ENCODE measurements at regions of chr17 and their contacts with region 1.

Region 1: DNA sequence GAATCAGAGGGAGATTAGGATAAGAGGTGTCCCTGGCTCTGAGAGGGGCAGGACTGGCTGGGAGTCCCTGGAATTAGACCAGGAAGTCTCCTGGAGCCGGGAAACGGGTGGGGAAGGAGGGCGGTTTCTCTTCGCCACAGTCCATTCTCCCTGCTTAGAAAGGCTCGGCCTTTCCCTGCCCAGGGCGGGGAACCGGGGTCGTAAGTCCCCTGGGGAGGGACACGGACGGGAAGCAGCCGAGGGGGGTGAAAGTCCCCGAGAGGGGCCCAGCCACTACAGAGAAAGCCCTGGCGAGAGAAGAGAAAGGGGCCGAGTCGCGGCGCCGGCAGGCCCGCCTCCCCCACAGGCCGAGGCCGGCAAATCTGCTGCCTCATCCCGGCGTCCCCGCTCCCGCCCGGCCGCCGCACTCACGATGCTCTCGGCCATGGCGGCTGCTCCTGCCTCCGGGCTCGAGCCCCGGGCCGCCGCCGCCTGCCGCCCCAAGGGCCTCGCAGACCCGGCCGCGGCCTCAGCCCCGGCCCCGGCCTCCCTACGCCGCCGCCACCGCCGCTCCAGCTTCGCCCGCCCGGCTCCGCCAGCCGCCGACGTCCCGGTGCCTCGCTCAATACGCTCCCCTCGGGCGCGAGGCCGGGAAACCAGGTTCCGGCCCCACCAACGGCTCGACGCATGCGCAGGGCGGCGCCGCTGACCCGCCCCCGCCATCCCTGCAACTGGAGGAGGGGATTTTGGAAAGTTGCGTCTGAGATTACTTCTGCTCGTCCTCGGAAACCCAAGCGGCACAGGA is at the starts of genes NPLOC4 and TSPAN10:
- H3K4me3 Mint-ChIP-seq: peak within 1 kb of the TSS; percentile 83
- H3K27ac Mint-ChIP-seq: peak within 1 kb of the TSS; percentile 92
- H3K4me1 Mint-ChIP-seq: peaks cover 13% of the 10 kb centered on the region
- H3K27me3 Mint-ChIP-seq: peaks cover 4% of the 10 kb centered on the region

Region 2: DNA sequence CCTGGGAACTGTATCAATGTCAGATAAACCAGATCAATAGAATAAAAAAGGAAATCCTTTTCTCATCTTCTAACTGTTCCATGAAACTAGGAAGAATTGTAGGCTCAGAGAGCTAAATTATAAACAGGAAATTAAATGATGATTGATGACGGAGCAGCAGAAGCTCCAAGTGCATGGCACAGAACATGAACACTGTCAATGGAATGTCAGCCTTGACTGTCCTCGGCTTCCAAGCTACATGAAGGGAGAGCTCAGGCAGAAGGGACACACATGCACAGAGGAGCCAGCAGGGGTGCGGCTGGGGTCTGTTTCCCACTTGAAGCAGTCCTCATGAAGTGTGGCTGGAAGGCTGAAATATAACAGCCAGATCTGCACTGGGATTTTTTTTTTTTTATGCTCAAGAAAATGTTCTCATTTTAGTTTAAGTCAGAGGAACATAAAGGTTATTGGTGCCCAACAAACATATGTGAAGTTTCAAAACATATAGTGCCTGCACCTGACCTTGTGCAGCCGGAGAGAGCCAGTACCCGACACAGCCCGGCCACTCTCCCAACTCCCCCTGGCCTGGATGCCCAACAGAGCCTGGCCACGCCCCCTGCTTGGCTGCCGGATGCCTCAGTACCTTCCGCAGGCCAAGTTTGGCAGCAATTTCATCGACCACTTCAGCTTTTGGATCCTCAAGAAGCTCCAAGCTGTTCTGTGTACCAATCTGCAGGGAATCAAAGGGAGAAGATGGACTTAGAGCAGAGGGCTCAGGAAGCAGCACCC is 36.8 kb before region 1 on chr17:
- intact Hi-C with region 1: no loop called
- H3K4me3 Mint-ChIP-seq: no peak overlapping the region
- H3K27ac Mint-ChIP-seq: no peak overlapping the region
- H3K4me1 Mint-ChIP-seq: peaks cover 41% of the 10 kb centered on the region
- H3K27me3 Mint-ChIP-seq: no peaks in the 10 kb centered on the region

Region 3: GRCh38 chr17:81666342-81667191 is 29.9 kb after region 1 on chr17 and contains the starts of genes CCDC137 and OXLD1:
- intact Hi-C with region 1: loop called (anchors 1 kb)
- H3K4me3 Mint-ChIP-seq: peak within 1 kb of the TSS; percentile 89
- H3K27ac Mint-ChIP-seq: peak within 1 kb of the TSS; percentile 89
- H3K4me1 Mint-ChIP-seq: peaks cover 39% of the 10 kb centered on the region
- H3K27me3 Mint-ChIP-seq: no peaks in the 10 kb centered on the region